Activated naive CD4-positive, alpha-beta T cell treated with anti-CD3 and anti-CD28 coated beads, Interleukin-2, amount 10 ng/mL, durations not matched to agents 7 days and 5 days (primary cell): ENCODE measurements at regions of chr10 and their contacts with region 1.

Region 1: GRCh38 chr10:97553575-97554031 is 19.0 kb upstream of the ANKRD2 start:
- DNase-seq: peak; percentile 75
- H3K4me3 Mint-ChIP-seq: no peak overlapping the region
- H3K27ac Mint-ChIP-seq: no peak overlapping the region
- H3K4me1 Mint-ChIP-seq: no peaks in the 10 kb centered on the region
- H3K27me3 Mint-ChIP-seq: no peaks in the 10 kb centered on the region

Region 2: GRCh38 chr10:97400665-97401454 is 152.7 kb before region 1 on chr10 and contains the start of gene RRP12:
- CTCF ChIA-PET with region 1: interaction called, 18 read pairs
- DNase-seq: peak; percentile 92
- H3K4me3 Mint-ChIP-seq: peak within 1 kb of the TSS; percentile 95
- H3K27ac Mint-ChIP-seq: peak within 1 kb of the TSS; percentile 95
- H3K4me1 Mint-ChIP-seq: peaks cover 16% of the 10 kb centered on the region
- H3K27me3 Mint-ChIP-seq: peaks cover 8% of the 10 kb centered on the region

Region 3: GRCh38 chr10:97407211-97407951 is 146.2 kb before region 1 on chr10:
- CTCF ChIA-PET with region 1: interaction called, 28 read pairs
- DNase-seq: peak; percentile 73
- H3K4me3 Mint-ChIP-seq: peak overlapping the region; percentile 5
- H3K27ac Mint-ChIP-seq: peak overlapping the region; percentile 24
- H3K4me1 Mint-ChIP-seq: peaks cover 13% of the 10 kb centered on the region
- H3K27me3 Mint-ChIP-seq: peaks cover 4% of the 10 kb centered on the region

Region 4: DNA sequence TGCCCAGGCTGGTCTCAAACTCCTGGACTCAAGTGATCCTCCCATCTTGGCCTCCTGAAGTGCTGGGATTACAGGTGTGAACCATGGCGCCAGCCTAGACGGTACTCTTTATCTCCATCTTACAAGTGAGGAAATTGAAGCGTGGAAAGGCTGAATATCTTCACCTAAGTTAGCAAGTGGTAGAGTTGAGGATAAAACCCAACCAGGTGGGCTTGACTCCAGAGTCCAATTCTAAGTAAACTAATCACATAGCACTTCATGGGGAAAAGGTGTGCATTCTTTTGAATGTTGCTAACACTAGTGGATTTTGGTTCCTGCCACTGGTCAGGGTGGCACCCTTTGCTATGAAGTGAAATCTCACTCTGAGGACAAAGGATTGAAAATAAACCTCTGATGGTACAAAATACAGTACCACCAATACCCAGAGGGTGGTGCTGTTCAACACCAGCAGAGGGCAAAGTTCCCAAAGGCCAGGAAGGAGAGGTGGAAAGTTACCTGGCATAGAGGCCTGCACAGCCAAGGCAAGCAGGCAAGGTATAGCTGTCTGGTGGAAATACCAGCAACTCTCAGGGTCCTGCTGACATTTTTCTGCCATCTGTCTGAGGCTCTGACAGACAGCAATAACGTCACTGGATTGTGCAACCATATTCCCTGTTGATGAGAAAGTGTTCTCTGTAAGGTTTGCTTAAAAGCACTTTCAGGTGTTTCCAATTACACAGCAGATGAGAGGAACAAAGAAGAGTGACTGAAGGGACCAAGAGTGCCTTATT is 90.1 kb before region 1 on chr10:
- CTCF ChIA-PET with region 1: interaction called, 73 read pairs
- DNase-seq: peak; percentile 41
- H3K4me3 Mint-ChIP-seq: no peak overlapping the region
- H3K27ac Mint-ChIP-seq: peak overlapping the region; percentile 34
- H3K4me1 Mint-ChIP-seq: no peaks in the 10 kb centered on the region
- H3K27me3 Mint-ChIP-seq: no peaks in the 10 kb centered on the region

Region 5: DNA sequence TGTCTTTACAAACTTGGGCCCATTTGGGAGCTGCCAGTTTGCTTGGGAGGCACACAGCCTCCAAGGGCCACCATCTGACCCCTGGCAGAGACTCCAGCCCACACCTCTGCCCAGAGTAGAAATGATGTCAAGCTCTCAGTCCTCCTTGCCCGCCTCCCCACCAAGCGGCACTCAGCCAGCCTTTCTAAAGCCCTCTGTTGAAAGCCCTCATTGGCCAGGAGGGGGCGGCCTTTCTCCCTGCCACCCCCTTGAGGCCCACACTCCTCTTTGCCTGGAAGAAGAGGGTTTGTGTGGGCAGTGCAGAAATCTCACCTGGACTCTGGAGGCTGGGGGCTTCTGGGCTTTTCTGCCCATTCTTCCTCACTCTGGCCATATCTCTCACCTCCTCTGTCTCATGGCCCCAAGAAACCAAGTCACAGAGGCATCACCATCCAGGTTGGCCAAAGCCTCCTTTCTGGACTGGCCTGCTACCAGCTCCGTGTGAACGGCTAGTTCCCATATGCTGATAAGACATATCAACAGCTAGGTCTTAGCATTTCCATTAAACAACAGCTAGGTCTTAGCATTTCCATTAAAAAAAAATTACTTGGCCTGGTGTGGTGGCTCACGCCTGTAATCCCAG is 18.7 kb before region 1 on chr10:
- CTCF ChIA-PET with region 1: interaction called, 76 read pairs
- DNase-seq: peak; percentile 47
- H3K4me3 Mint-ChIP-seq: no peak overlapping the region
- H3K27ac Mint-ChIP-seq: no peak overlapping the region
- H3K4me1 Mint-ChIP-seq: no peaks in the 10 kb centered on the region
- H3K27me3 Mint-ChIP-seq: no peaks in the 10 kb centered on the region

Region 6: GRCh38 chr10:97572214-97572989 is 18.8 kb after region 1 on chr10 and contains the start of gene ANKRD2:
- CTCF ChIA-PET with region 1: interaction called, 31 read pairs
- DNase-seq: peak; percentile 74
- H3K4me3 Mint-ChIP-seq: no peak within 1 kb of the TSS
- H3K27ac Mint-ChIP-seq: peak within 1 kb of the TSS; percentile 49
- H3K4me1 Mint-ChIP-seq: no peaks in the 10 kb centered on the region
- H3K27me3 Mint-ChIP-seq: peaks cover 13% of the 10 kb centered on the region